ENCODE measurements at regions of chr11 and their contacts with region 1.

Region 1: DNA sequence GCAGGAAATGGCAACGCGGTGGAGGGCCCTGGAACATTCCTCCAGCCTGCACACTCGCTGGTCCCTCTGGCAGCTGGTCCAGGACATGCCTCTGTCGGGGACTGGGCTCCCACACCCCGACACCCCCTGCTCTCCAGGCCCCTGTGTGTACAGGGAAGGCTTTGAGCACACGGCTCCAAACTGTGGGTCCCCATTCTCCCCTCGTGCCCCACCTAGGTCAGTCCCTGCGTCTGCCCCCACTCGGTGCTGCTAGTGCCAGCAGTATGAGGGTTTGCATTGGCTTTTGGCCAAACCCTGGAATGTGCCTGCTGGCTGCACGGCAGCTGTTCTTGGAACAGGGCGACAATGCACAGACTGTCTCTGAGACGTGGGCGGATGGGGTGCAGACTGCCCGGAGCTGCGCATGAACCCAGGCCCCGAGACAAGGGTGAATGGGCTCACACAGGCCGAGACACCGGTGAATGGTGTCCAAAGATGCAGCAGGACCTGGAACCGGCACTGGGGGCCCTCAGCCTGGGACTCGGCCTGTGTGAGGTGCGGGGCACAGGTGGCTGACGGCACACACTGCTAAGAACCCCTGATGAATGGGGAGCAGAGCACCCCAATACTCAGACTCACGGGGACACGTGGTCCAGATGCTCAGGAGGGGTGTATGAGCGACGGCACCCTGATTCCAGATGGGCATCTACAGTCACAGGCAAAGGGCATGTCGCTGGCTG is 7.5 kb upstream of the SYT8 start:
- DNase-seq: no peak
- ATAC-seq: no peak
- H3K4me3 Mint-ChIP-seq: no peak overlapping the region
- H3K27ac Mint-ChIP-seq: no peak overlapping the region
- H3K4me1 Mint-ChIP-seq: peaks cover 4% of the 10 kb centered on the region; the same call in 1 of the 2 replicates
- H3K27me3 Mint-ChIP-seq: no peaks in the 10 kb centered on the region; the same call in 1 of the 2 replicates
- CTCF ChIP-seq: no peak

Region 2: GRCh38 chr11:1706634-1707400 is 120.4 kb before region 1 on chr11:
- CTCF ChIA-PET with region 1: interaction called, 20 read pairs
- POLR2A ChIA-PET with region 1: interaction called, 3 read pairs
- DNase-seq: peak; percentile 36
- ATAC-seq: no peak; the same call in 1 of the 2 replicates
- H3K4me3 Mint-ChIP-seq: no peak overlapping the region
- H3K27ac Mint-ChIP-seq: no peak overlapping the region
- H3K4me1 Mint-ChIP-seq: no peaks in the 10 kb centered on the region
- H3K27me3 Mint-ChIP-seq: peaks cover 58% of the 10 kb centered on the region
- CTCF ChIP-seq: no peak

Region 3: DNA sequence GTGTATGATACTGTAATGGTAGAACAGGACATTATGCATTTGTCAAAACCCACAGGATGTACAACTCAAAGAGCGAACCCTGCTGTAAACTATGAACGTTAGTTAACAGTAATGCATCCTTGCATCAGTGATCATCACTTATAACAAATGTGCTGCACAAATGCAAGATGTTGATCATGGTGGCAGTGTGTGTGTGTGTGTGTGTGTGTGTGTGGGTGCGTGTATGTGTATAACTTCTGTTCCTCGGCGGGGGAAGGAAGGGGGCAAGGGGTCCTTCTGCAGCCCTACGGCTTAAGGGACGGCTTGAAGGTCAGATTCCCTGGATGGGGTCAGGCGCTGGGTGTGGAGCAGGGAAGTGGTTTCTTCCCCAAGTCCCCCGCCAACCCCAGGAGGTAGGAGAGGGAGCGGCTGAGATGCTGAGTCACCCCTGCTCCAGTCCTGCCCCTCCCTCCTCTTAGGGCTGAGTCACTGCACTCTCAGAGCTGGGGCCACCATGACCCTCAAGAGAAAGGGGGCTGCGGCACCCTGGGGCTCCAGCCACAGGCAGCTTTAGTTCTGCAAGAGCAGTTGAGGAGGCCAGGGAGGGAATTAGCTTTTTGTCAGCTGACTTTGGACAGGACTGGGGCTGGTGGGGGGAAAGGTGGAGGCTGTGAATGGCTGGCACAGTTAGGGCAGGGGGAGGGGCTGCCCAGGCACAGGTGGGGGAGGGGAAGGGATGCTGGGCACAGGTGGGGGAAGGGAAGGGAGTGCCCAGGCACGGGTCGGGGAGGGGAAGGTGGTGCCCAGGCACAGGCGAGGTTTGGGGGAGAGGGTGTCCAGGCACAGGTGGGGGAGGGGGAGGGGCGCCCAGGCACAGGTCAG is 54.8 kb before region 1 on chr11:
- CTCF ChIA-PET with region 1: interaction called, 22 read pairs
- POLR2A ChIA-PET with region 1: no interaction called
- DNase-seq: peak; percentile 61
- ATAC-seq: peak; percentile 90
- H3K4me3 Mint-ChIP-seq: no peak overlapping the region
- H3K27ac Mint-ChIP-seq: no peak overlapping the region
- H3K4me1 Mint-ChIP-seq: peaks cover 20% of the 10 kb centered on the region
- H3K27me3 Mint-ChIP-seq: peaks cover 8% of the 10 kb centered on the region
- CTCF ChIP-seq: no peak

Region 4: DNA sequence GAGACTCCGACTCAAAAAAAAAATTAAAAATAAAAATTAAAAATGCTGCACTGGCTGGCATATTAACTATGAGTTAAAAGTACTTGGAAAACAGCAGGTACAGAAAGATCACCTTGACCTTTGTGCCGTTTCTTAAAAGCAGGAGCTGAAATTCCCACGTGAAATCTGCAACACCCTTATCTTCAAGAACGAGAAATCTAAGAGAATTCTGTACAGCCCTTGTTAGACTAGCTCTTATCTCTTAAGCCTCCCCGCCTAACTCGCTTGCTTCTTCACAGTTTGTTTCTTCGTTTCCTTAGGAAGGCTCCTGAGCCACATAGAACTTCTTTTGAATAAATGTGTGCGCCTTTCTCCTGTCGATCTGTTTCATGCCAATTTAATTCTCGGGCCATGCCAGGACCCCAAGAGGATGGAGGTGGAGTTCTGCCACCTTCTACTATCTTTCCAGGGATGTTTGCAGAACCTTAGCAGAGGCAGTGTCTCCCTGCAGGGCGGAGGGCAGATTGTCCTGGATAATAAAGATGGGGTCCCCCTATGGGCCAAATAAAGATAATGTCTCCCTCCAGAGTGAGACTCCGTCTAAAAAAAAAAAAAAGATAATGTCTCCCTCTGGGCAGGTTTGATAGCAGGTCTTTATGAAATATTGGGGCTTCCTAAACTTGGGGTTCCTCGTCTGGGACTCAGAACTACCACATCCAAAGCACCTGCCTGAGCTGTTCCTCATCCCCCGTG is 19.8 kb before region 1 on chr11:
- CTCF ChIA-PET with region 1: interaction called, 49 read pairs
- POLR2A ChIA-PET with region 1: no interaction called
- DNase-seq: no peak
- ATAC-seq: peak; percentile 80
- H3K4me3 Mint-ChIP-seq: no peak overlapping the region
- H3K27ac Mint-ChIP-seq: no peak overlapping the region
- H3K4me1 Mint-ChIP-seq: peaks cover 8% of the 10 kb centered on the region
- H3K27me3 Mint-ChIP-seq: peaks cover 24% of the 10 kb centered on the region
- CTCF ChIP-seq: no peak; the same call in 1 of the 2 replicates

Region 5: DNA sequence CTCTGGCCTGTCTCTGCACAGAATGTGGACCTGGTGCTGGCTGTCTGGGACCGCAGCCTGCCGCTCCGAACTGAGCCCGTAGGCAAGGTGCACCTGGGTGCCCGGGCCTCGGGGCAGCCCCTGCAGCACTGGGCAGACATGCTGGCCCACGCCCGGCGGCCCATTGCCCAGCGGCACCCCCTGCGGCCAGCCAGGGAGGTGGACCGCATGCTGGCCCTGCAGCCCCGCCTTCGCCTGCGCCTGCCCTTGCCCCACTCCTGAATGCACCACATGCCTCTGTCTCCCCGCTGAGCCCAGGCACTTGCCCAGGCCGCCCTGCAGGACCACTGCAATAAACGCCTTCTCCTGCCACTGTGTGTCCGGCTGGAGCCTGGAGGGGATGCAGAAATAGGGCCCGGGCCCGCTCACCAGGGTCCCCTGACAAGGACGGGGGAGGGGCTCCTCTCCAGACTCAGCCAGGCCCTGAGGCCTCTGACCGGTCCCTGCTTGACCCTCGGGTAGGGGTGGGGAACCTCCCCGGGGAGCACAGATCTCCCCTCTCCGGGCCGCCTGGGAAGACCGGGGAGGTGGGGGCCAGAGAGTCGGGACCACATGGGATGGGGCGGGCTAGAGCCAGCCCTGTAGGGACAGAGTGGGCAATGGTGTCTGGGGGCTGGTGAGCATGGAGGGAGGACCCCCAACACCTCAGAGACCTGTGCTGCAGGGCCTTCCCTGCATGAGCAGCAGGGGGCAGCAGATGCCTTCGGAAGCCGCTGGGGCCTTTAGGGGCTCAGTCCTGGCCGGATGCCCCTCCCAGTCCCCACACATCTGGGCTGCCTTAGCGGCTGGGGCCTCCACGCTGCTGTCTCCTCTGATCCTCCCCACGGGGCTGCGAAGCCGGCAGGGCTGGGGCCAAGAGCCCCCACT is 10.2 kb after region 1 on chr11:
- CTCF ChIA-PET with region 1: interaction called, 36 read pairs
- POLR2A ChIA-PET with region 1: no interaction called
- DNase-seq: peak; percentile 88
- ATAC-seq: peak; percentile 84
- H3K4me3 Mint-ChIP-seq: no peak overlapping the region
- H3K27ac Mint-ChIP-seq: no peak overlapping the region
- H3K4me1 Mint-ChIP-seq: no peaks in the 10 kb centered on the region
- H3K27me3 Mint-ChIP-seq: peaks cover 5% of the 10 kb centered on the region
- CTCF ChIP-seq: peak; percentile 57

Region 6: GRCh38 chr11:2002807-2003206 is 175.6 kb after region 1 on chr11:
- CTCF ChIA-PET with region 1: interaction called, 49 read pairs
- POLR2A ChIA-PET with region 1: no interaction called
- DNase-seq: no peak
- ATAC-seq: no peak
- H3K4me3 Mint-ChIP-seq: no peak overlapping the region
- H3K27ac Mint-ChIP-seq: no peak overlapping the region
- H3K4me1 Mint-ChIP-seq: no peaks in the 10 kb centered on the region
- H3K27me3 Mint-ChIP-seq: no peaks in the 10 kb centered on the region
- CTCF ChIP-seq: no peak

Measured in WTC11 (cell line).